ENCODE measurements at regions of chr6 and their contacts with region 1.

Region 1: DNA sequence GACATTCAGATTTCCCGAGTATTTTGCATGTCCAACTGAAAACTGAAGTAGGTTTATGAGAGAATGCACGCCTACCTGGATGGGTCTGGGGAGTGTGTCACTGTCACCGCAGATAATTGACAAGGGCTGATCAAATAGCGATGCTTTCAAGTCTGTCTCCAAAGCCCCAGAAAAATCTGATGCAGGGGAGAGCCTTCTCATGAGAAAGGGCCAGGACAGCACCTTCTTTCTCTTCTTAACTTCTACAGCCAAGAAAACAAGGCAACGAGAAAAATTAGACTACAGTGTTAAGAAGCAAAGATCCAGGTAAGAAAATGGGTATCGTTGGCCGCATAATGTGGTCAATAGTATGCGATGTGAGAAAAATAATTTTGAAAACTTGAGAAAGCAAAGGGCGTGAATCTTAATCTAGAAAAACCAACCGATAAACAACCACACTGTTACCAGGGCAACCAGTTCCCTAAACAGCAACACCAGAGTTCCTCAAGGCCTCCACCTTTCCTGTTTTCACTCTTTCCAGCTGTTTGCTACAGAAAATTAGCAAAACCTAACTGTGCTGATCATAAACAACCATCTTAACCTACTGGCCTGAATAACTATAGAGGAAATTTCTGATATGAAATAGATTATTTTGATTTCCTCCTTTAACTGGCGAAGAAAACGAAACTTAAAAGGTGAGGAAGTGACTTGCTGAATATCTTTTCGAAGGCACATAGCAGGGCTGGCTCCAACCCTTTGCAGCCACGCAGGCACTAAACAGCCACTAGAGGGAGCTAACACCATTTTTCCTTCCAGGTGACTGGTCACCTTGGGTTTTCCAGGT is 2.6 kb downstream of the TAGAP start:
- DNase-seq: peak; percentile 74
- H3K4me3 Mint-ChIP-seq: peak overlapping the region; percentile 91
- H3K27ac Mint-ChIP-seq: peak overlapping the region; percentile 90
- H3K4me1 Mint-ChIP-seq: peaks cover 68% of the 10 kb centered on the region
- H3K27me3 Mint-ChIP-seq: no peaks in the 10 kb centered on the region

Region 2: DNA sequence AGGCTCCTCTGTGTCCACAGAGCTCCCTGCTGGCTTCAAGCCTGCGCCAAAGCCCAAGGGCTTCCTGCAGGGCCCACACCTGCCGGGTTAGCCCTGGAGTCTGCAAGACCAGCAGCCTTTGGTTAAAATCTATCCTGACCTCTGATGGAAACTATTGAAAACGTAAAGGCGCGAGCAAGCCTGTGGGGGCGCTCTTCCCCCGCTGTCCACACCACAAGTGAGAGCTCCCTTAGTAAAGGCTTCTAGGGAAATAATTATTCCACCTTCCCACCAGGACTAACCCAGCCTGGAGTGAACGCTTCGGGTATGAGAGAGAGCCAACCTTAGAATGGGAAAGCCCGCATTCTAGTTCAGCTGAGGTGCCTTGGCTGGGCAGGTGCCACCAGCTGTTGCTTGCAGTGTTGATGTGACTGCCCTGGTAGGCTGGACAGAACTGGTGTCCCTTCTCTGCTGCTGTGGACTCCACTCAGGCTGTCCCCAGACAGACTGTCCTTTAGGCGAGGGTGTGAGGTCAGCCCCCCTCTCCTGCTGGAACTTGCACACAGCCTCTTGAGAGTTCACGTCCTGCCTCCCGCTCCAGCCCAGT is 323.7 kb before region 1 on chr6:
- intact Hi-C with region 1: loop called (anchors 5 kb)
- DNase-seq: no peak
- H3K4me3 Mint-ChIP-seq: no peak overlapping the region
- H3K27ac Mint-ChIP-seq: no peak overlapping the region
- H3K4me1 Mint-ChIP-seq: peaks cover 69% of the 10 kb centered on the region
- H3K27me3 Mint-ChIP-seq: peaks cover 2% of the 10 kb centered on the region

Region 3: DNA sequence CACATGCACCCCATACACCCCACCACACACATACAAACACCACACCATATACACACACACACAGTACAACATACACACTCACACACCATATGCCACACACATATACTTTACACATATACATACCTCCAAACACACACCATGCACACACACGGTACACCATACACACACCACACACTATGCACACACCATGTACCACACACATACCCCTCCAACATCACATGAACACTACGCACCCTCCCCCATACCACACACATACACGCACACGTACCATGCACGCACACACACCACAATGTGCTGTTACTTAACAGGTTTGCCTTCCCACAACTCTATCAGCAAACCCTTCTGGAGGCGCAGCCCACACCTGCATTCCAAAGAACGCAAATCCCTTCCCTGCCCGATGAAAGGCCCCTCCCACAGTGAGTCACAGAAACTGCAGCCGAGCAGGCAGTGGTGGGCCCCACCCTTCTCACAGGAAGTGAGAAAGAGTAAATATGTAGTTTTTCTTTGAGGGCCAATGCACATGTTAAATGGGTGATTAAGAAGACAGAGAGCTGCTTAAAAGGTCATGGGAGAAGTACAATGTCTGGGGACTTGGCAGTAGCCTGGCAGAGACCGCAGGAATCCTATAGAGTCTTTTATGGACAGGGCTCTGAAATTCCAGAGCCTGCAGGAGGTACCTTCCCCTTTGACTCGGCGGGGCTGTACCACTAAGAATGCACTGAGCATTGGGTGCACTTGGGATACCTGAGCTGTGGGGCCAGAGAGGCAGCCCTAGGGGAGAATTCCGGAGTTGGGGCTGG is 188.9 kb before region 1 on chr6:
- intact Hi-C with region 1: loop called (anchors 2 kb)
- DNase-seq: peak; percentile 85
- H3K4me3 Mint-ChIP-seq: no peak overlapping the region
- H3K27ac Mint-ChIP-seq: no peak overlapping the region
- H3K4me1 Mint-ChIP-seq: peaks cover 20% of the 10 kb centered on the region
- H3K27me3 Mint-ChIP-seq: no peaks in the 10 kb centered on the region

Region 4: GRCh38 chr6:159023893-159024292 is 18.3 kb before region 1 on chr6:
- intact Hi-C with region 1: loop called (anchors 1 kb)
- DNase-seq: no peak
- H3K4me3 Mint-ChIP-seq: peak overlapping the region; percentile 41
- H3K27ac Mint-ChIP-seq: peak overlapping the region; percentile 70
- H3K4me1 Mint-ChIP-seq: peaks cover 22% of the 10 kb centered on the region
- H3K27me3 Mint-ChIP-seq: peaks cover 2% of the 10 kb centered on the region

Region 5: DNA sequence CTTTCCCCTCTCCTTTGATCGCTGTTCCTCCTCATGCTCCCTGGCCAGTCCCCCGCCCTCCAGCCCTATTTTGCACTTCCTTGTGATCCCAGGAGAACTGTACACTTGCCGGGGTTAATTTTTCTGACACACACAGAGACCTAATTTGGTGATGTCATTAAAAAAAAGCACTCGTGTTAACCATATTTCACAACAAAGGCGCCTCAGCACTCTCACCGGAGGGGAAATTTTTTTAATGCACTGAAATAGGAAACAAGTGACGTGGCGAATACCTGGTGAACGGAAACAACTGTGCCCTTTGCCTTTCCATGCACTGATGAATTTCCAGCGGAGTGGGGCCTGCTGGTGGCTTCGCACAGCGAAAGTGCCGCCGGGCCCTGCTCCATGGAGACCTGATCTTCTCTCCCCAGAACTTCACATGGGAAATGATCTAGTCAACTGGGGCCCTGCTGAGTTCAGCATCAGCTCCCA is 56.5 kb after region 1 on chr6:
- intact Hi-C with region 1: loop called (anchors 1 kb)
- DNase-seq: peak; percentile 67
- H3K4me3 Mint-ChIP-seq: peak overlapping the region; percentile 76
- H3K27ac Mint-ChIP-seq: peak overlapping the region; percentile 96
- H3K4me1 Mint-ChIP-seq: peaks cover 88% of the 10 kb centered on the region
- H3K27me3 Mint-ChIP-seq: no peaks in the 10 kb centered on the region

Region 6: GRCh38 chr6:159134701-159135364 is 92.6 kb after region 1 on chr6:
- intact Hi-C with region 1: loop called (anchors 1 kb)
- DNase-seq: peak; percentile 67
- H3K4me3 Mint-ChIP-seq: no peak overlapping the region
- H3K27ac Mint-ChIP-seq: no peak overlapping the region
- H3K4me1 Mint-ChIP-seq: peaks cover 10% of the 10 kb centered on the region
- H3K27me3 Mint-ChIP-seq: peaks cover 10% of the 10 kb centered on the region

Region 7: GRCh38 chr6:159968440-159969203 is 926.4 kb after region 1 on chr6 and contains the start of gene IGF2R:
- intact Hi-C with region 1: loop called (anchors 10 kb)
- DNase-seq: peak; percentile 90
- H3K4me3 Mint-ChIP-seq: peak within 1 kb of the TSS; percentile 96
- H3K27ac Mint-ChIP-seq: peak within 1 kb of the TSS; percentile 93
- H3K4me1 Mint-ChIP-seq: peaks cover 34% of the 10 kb centered on the region
- H3K27me3 Mint-ChIP-seq: peaks cover 17% of the 10 kb centered on the region
- total RNA-seq, gene IGF2R: 118 and 126 TPM in 2 replicates